Tibial artery (tissue), 4 donors: ENCODE measurements at regions of chr22 and their contacts with region 1.

Region 1: DNA sequence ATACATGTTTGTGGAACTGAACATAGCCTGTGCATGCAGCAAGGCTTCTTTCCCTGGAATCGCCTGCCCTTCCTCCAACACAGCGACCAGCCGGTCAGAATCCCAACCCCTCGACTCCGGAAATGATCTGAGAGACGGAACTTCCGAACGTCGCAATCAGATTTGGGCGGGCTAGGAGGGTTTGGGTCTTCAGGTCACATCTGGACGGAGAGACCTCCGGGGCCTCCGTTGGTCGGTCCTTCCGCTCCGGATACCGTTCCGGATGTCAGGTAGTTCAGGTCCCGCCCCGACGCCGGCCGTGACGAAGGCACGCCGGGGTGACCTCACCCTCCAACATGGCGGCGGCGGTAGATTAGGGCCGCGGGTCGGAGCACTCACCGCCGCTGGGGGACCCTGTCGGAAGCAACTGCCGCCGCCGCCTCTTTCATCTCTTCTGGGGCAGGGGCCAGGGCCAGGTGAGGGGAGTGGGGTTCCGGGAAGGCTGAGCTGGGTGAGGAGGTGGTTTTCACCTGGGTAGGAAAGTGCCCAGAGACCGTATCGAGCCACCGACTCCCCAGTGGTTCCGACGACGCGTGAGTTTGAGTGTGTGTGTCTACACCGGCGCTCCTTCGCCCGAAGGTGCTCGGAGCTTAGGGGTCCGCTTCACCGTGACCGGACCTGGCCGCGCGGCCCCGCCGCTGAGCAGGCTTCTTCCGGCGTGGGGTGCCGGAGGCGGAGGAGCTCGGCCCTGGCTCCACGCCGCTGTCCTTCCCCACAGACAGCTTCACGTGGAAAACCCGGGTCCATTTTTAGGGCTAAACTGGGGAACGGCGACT is at the start of gene BCL2L13:
- DNase-seq: peak; percentile 89 to 94
- H3K4me3 ChIP-seq: peak within 1 kb of the TSS; percentile 83 to 84
- H3K27ac ChIP-seq: peak within 1 kb of the TSS; percentile 98 to 99
- H3K4me1 ChIP-seq: peaks cover 0 to 21% (median 10%) of the 10 kb centered on the region in 4 donors
- H3K27me3 ChIP-seq: no peaks in the 10 kb centered on the region
- CTCF ChIP-seq: peak in 1 of 2 experiments; percentile 24

Region 2: GRCh38 chr22:17706018-17706900 is 67.6 kb after region 1 on chr22:
- intact Hi-C with region 1: loop called (anchors 10 kb)
- DNase-seq: peak; percentile 69 to 81
- H3K4me3 ChIP-seq: peak overlapping the region; percentile 40 to 47
- H3K27ac ChIP-seq: peak overlapping the region; percentile 67 to 78
- H3K4me1 ChIP-seq: peaks cover 0 to 21% (median 9%) of the 10 kb centered on the region in 4 donors
- H3K27me3 ChIP-seq: no peaks in the 10 kb centered on the region
- CTCF ChIP-seq: no peak